ENCODE measurements at regions of chr2 and their contacts with region 1.

Region 1: DNA sequence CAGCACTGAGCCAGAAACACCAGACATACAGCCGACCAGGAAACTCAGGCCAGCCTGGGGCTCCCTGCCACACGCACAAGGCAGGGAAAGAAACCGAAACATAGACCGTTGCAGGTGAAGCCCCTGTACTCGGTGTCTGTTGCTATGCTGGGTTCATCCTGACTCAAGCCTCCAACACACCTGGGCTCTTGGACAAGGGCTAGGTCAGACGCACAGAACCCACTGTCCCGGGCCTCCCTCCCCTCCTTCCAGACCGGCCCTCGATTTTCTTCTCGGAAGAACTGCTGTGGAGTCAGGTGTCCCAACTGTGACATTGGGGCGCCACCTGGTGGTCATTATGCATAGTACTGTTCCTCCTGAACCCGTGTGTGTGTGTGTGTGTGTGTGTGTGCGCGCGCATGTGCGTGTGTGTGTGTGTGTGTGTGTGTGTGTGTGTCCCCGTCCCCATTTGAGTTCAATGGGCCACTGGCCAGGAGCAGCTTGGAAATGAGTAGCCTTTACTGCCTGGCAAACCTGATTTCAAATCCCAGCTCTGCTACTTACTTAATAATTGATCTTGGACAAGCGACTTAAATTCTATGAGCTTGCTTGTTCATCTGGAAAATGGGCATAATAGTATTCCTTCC is 55.4 kb upstream of the GLI2 start:
- DNase-seq: peak; percentile 90
- H3K4me3 Mint-ChIP-seq: no peak overlapping the region
- H3K27ac Mint-ChIP-seq: no peak overlapping the region
- H3K4me1 Mint-ChIP-seq: peaks cover 10% of the 10 kb centered on the region
- H3K27me3 Mint-ChIP-seq: no peaks in the 10 kb centered on the region
- CTCF ChIP-seq: peak; percentile 65

Region 2: GRCh38 chr2:120239488-120240287 is 440.6 kb before region 1 on chr2:
- CTCF ChIA-PET with region 1: no interaction called
- POLR2A ChIA-PET with region 1: no interaction called
- intact Hi-C with region 1: loop called (anchors 5 kb)
- DNase-seq: peak; percentile 56
- H3K4me3 Mint-ChIP-seq: no peak overlapping the region
- H3K27ac Mint-ChIP-seq: no peak overlapping the region
- H3K4me1 Mint-ChIP-seq: peaks cover 9% of the 10 kb centered on the region
- H3K27me3 Mint-ChIP-seq: no peaks in the 10 kb centered on the region
- CTCF ChIP-seq: no peak

Region 3: DNA sequence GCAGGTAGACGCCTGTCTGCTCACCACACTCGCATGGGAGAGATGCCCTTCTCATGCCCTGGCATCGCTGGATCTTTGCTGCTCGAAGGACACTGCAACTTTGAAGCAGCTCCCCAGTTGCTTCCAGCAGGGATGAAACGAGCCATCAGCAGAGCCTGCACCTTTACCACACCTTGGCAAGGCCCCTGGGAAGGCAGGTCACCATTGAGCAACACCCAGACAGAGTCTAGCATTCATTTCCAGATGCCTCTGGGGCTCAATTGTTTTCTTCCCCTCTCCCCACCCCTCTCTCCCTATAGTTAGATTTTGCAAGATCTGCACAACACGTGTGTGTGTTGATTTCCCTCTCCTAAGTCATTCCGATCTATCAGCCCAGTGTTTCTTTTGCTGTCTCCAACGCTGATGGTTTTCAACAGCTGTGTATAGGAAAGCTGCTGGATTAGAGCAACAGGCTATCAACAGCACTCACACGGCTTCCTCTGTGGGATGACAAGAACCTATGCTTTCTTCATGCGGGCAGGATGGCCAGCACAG is 359.9 kb before region 1 on chr2:
- CTCF ChIA-PET with region 1: interaction called, 121 read pairs
- POLR2A ChIA-PET with region 1: interaction called, 4 read pairs
- intact Hi-C with region 1: loop called (anchors 10 kb)
- DNase-seq: peak; percentile 94
- H3K4me3 Mint-ChIP-seq: peak overlapping the region; percentile 25
- H3K27ac Mint-ChIP-seq: peak overlapping the region; percentile 71
- H3K4me1 Mint-ChIP-seq: peaks cover 31% of the 10 kb centered on the region
- H3K27me3 Mint-ChIP-seq: no peaks in the 10 kb centered on the region
- CTCF ChIP-seq: no peak

Region 4: GRCh38 chr2:120491111-120491625 is 189.1 kb before region 1 on chr2:
- CTCF ChIA-PET with region 1: no interaction called
- POLR2A ChIA-PET with region 1: no interaction called
- intact Hi-C with region 1: no loop called
- DNase-seq: no peak
- H3K4me3 Mint-ChIP-seq: no peak overlapping the region
- H3K27ac Mint-ChIP-seq: no peak overlapping the region
- H3K4me1 Mint-ChIP-seq: no peaks in the 10 kb centered on the region
- H3K27me3 Mint-ChIP-seq: no peaks in the 10 kb centered on the region
- CTCF ChIP-seq: no peak

Region 5: GRCh38 chr2:120508567-120509041 is 171.6 kb before region 1 on chr2:
- CTCF ChIA-PET with region 1: interaction called, 12 read pairs
- POLR2A ChIA-PET with region 1: no interaction called
- intact Hi-C with region 1: no loop called
- DNase-seq: peak; percentile 86
- H3K4me3 Mint-ChIP-seq: no peak overlapping the region
- H3K27ac Mint-ChIP-seq: no peak overlapping the region
- H3K4me1 Mint-ChIP-seq: peaks cover 13% of the 10 kb centered on the region
- H3K27me3 Mint-ChIP-seq: no peaks in the 10 kb centered on the region
- CTCF ChIP-seq: no peak

Region 6: DNA sequence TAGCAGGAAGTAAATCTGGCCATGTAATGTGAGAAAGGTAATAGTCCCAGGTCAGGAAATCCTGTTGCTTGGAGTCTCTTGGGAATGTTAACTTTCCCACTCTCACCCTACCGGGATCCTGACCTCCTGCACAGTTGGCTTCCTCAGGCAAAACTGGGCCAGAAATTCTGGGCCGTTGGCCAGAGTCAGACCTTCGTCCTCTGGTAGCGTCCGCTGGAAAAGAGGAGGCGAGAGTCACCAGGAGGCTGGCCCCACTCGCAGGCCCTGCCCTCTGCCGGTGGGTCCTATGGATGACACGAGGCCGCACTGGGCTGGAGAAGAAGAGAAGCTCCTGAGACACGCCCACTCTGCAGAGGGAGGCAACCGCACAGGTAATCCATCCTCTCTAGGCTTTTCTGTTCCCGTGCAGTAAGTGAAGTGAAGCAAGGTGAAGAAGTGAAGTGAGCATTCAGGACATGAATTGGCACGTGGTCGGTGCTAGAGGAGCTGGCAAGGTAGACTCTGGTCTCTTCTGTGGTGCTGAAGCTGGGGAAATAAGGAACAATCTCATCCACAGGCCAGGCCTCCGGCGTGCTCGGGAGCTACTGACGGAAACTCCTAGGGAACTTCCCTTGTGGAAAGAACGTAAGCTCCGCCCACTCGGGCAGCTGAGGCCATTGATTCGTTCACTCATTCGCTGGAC is 127.3 kb before region 1 on chr2:
- CTCF ChIA-PET with region 1: interaction called, 12 read pairs
- POLR2A ChIA-PET with region 1: no interaction called
- intact Hi-C with region 1: loop called (anchors 1 kb)
- DNase-seq: peak; percentile 94
- H3K4me3 Mint-ChIP-seq: no peak overlapping the region
- H3K27ac Mint-ChIP-seq: no peak overlapping the region
- H3K4me1 Mint-ChIP-seq: peaks cover 6% of the 10 kb centered on the region
- H3K27me3 Mint-ChIP-seq: no peaks in the 10 kb centered on the region
- CTCF ChIP-seq: peak; percentile 81

Measured in MCF 10A (cell line).